ENCODE measurements at regions of chr17 and their contacts with region 1.

Region 1: DNA sequence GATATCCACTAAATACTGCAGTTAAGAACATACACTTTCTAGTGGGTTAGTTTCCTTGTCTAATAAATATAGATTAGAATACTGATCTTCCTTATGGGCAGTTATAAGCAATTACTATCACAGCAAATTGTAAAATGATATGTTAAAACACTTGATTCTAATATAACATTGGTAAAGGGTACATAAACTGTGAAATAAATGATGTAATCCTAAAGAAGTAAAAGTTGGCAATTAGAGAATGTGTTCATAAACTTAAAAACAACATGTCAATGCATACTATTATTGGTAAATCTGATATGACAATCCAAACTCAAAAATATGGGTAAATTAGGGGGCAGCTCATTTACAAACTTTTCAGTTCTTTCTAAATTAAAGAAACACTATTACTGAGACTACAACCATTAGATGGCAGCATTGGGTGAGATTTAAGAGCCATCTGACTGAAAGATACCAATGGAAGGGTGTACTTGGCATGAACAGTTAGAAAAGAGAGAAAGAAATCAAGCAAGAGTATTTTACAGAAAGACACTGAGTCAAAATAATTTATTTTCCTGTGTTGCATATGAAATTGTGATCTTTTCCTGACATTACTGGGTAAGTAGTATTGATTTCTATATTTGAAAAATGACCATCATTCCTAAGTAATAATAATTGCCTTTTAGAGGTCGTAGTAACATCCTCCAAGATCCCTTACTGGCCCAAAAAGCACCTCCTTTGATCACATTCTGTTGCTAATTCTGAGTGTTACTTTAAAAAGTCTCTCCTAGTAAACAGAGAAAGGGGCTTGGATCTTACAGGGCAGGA is 119.6 kb downstream of the SPAG9 start:
- DNase-seq: no peak
- H3K4me3 Mint-ChIP-seq: no peak overlapping the region
- H3K27ac Mint-ChIP-seq: no peak overlapping the region
- H3K4me1 Mint-ChIP-seq: no peaks in the 10 kb centered on the region
- H3K27me3 Mint-ChIP-seq: no peaks in the 10 kb centered on the region

Region 2: GRCh38 chr17:50935201-50935995 is 65.6 kb before region 1 on chr17:
- CTCF ChIA-PET with region 1: no interaction called
- POLR2A ChIA-PET with region 1: no interaction called
- intact Hi-C with region 1: no loop called
- DNase-seq: no peak
- H3K4me3 Mint-ChIP-seq: no peak overlapping the region
- H3K27ac Mint-ChIP-seq: no peak overlapping the region
- H3K4me1 Mint-ChIP-seq: peaks cover 8% of the 10 kb centered on the region
- H3K27me3 Mint-ChIP-seq: no peaks in the 10 kb centered on the region

Region 3: GRCh38 chr17:51056813-51057510 is 55.9 kb after region 1 on chr17:
- CTCF ChIA-PET with region 1: interaction called, 49 read pairs
- POLR2A ChIA-PET with region 1: no interaction called
- intact Hi-C with region 1: loop called (anchors 1 kb)
- DNase-seq: no peak
- H3K4me3 Mint-ChIP-seq: no peak overlapping the region
- H3K27ac Mint-ChIP-seq: no peak overlapping the region
- H3K4me1 Mint-ChIP-seq: peaks cover 13% of the 10 kb centered on the region
- H3K27me3 Mint-ChIP-seq: no peaks in the 10 kb centered on the region

Region 4: DNA sequence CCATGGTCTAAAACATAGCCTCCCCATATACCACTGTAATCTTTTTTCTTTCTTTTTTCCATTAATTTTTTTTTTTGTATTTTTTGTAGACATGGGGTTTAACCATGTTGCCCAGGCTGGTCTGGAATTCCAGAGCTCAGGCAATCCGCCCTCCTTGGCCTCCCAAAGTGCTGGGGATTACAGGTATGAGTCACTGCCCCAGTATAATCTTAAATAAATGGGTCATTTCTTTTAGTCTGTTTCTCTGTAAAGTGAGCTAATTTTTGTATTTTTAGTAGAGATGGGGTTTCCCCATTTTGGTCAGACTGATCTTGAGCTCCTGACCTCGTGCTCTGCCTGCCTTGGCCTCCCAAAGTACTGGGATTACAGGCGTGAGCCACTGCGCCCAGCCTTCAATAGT is 146.6 kb after region 1 on chr17:
- CTCF ChIA-PET with region 1: interaction called, 124 read pairs
- POLR2A ChIA-PET with region 1: interaction called, 4 read pairs
- intact Hi-C with region 1: no loop called
- DNase-seq: peak; percentile 49
- H3K4me3 Mint-ChIP-seq: no peak overlapping the region
- H3K27ac Mint-ChIP-seq: peak overlapping the region; percentile 13
- H3K4me1 Mint-ChIP-seq: peaks cover 21% of the 10 kb centered on the region
- H3K27me3 Mint-ChIP-seq: no peaks in the 10 kb centered on the region

Region 5: DNA sequence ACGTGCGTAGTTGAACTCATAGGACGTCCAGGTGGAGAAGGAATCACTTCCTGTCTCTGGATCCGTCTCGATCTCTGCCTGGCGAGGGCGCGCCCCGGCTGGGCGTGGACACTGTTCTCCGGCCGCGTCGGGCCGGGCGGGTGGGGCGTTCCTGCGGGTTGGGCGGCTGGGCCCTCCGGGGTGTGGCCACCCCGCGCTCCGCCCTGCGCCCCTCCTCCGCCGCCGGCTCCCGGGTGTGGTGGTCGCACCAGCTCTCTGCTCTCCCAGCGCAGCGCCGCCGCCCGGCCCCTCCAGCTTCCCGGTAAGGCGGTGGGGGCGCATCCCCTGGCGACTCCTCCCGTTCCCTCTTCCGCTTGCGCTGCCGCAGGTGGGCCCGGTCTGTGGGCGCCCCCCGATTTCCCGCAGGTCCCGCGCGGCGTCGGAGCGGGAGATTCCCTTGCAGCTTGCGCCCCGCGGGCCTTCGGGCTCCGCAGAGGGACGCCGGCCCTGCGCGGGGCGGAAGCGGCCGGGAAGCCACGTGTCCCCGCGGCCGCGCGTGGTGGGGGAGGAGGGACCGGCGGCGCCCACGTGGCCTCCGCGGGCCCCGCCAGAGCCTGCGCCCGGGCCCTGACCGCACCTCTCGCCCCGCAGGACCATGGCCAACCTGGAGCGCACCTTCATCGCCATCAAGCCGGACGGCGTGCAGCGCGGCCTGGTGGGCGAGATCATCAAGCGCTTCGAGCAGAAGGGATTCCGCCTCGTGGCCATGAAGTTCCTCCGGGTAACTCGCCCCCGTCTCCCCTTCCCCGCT is 165.4 kb after region 1 on chr17 and contains the start of gene NME2:
- CTCF ChIA-PET with region 1: interaction called, 18 read pairs
- POLR2A ChIA-PET with region 1: interaction called, 4 read pairs
- intact Hi-C with region 1: loop called (anchors 5 kb)
- DNase-seq: peak; percentile 77
- H3K4me3 Mint-ChIP-seq: peak within 1 kb of the TSS; percentile 82
- H3K27ac Mint-ChIP-seq: peak within 1 kb of the TSS; percentile 89
- H3K4me1 Mint-ChIP-seq: peaks cover 29% of the 10 kb centered on the region
- H3K27me3 Mint-ChIP-seq: no peaks in the 10 kb centered on the region
- total RNA-seq, gene NME2: 790 to 814 TPM

Measured in activated CD4-positive, alpha-beta memory T cell treated with anti-CD3 and anti-CD28 coated beads for 36 hours (primary cell).